MCF 10A (cell line): ENCODE measurements at regions of chr15 and their contacts with region 1.

Region 1: GRCh38 chr15:29821416-29822131 is 694 bp downstream of the TJP1 start:
- DNase-seq: peak; percentile 87
- H3K4me3 Mint-ChIP-seq: peak overlapping the region; percentile 87
- H3K27ac Mint-ChIP-seq: peak overlapping the region; percentile 92
- H3K4me1 Mint-ChIP-seq: peaks cover 11% of the 10 kb centered on the region
- H3K27me3 Mint-ChIP-seq: no peaks in the 10 kb centered on the region
- CTCF ChIP-seq: no peak

Region 2: DNA sequence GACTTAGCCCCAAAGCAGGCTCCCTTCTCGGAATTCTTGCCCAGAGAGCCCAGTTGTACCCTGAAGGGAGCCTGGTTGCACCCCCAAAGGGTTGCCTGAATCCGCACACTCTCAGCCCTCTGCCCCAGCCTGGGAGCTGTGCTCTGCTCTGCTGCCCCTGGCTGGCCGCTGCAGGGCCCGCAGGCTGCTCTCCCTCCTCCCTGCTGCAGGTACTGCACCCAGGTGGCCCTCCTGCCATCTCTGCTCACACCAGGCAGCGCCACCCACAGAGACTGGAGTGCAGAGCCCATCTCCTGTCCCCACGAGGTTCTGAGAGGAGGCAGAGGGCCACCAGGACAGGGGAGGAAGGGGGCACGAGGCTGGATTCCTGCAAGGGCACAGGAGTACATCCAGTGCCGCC is 417.8 kb before region 1 on chr15:
- CTCF ChIA-PET with region 1: no interaction called
- POLR2A ChIA-PET with region 1: no interaction called
- intact Hi-C with region 1: no loop called
- DNase-seq: no peak
- H3K4me3 Mint-ChIP-seq: no peak overlapping the region
- H3K27ac Mint-ChIP-seq: no peak overlapping the region
- H3K4me1 Mint-ChIP-seq: no peaks in the 10 kb centered on the region
- H3K27me3 Mint-ChIP-seq: peaks cover 78% of the 10 kb centered on the region
- CTCF ChIP-seq: no peak

Region 3: DNA sequence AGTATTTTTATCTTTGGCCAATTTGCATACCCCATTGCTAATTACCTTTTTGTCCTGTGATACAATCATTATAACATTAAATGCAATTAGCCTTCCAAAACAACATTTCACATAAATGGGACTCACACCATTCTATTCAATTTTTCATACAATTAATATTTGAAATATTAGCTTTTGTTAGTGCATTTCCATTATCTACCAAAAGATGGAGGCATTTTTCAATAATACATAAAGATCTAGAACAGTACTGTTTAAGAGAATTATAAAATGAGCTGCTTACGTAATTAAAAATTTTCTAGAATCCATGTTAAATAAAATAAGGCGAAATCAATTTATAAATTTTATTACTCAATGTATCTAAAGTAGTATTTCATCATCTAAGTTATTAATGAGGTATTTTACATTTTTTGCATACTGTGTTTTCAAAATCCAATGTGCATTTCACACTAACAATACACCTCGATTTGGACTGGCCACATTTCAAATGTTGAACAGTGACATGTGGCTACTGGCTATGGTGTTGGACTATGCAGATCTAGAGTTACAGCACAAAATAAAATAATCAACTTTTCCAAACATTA is 73.6 kb before region 1 on chr15:
- CTCF ChIA-PET with region 1: interaction called, 4 read pairs
- POLR2A ChIA-PET with region 1: interaction called, 36 read pairs
- intact Hi-C with region 1: loop called (anchors 2 kb)
- DNase-seq: peak; percentile 30
- H3K4me3 Mint-ChIP-seq: no peak overlapping the region
- H3K27ac Mint-ChIP-seq: no peak overlapping the region
- H3K4me1 Mint-ChIP-seq: no peaks in the 10 kb centered on the region
- H3K27me3 Mint-ChIP-seq: no peaks in the 10 kb centered on the region
- CTCF ChIP-seq: peak; percentile 38

Region 4: DNA sequence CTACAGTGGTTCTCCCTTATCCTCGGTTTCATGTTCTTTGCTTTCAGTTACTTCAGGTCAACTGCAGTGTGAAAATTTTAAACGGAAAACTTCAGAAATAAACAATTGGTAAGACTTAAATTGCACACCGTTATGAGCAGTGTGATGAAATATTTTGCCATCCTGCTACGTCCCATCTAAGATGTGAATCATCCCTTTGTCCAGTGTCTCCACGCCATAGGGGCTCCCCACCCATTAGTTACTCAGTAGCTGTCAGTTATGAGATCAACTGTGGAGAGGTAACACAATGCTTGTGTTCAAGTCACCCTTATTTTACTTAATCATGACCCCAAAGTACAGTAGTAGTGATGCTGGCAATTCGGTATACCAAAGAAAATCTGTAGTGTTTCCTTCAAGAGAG is 46.7 kb before region 1 on chr15:
- CTCF ChIA-PET with region 1: no interaction called
- POLR2A ChIA-PET with region 1: interaction called, 4 read pairs
- intact Hi-C with region 1: loop called (anchors 2 kb)
- DNase-seq: peak; percentile 88
- H3K4me3 Mint-ChIP-seq: peak overlapping the region; percentile 8
- H3K27ac Mint-ChIP-seq: peak overlapping the region; percentile 81
- H3K4me1 Mint-ChIP-seq: peaks cover 30% of the 10 kb centered on the region
- H3K27me3 Mint-ChIP-seq: no peaks in the 10 kb centered on the region
- CTCF ChIP-seq: no peak

Region 5: GRCh38 chr15:29835301-29835700 is 13.7 kb after region 1 on chr15:
- CTCF ChIA-PET with region 1: interaction called, 3 read pairs
- POLR2A ChIA-PET with region 1: interaction called, 35 read pairs
- intact Hi-C with region 1: no loop called
- DNase-seq: peak; percentile 65
- H3K4me3 Mint-ChIP-seq: no peak overlapping the region
- H3K27ac Mint-ChIP-seq: peak overlapping the region; percentile 61
- H3K4me1 Mint-ChIP-seq: peaks cover 14% of the 10 kb centered on the region
- H3K27me3 Mint-ChIP-seq: no peaks in the 10 kb centered on the region
- CTCF ChIP-seq: no peak

Region 6: GRCh38 chr15:29913528-29914135 is 92.1 kb after region 1 on chr15:
- CTCF ChIA-PET with region 1: no interaction called
- POLR2A ChIA-PET with region 1: interaction called, 16 read pairs
- intact Hi-C with region 1: no loop called
- DNase-seq: no peak
- H3K4me3 Mint-ChIP-seq: no peak overlapping the region
- H3K27ac Mint-ChIP-seq: no peak overlapping the region
- H3K4me1 Mint-ChIP-seq: peaks cover 17% of the 10 kb centered on the region
- H3K27me3 Mint-ChIP-seq: no peaks in the 10 kb centered on the region
- CTCF ChIP-seq: no peak

Region 7: DNA sequence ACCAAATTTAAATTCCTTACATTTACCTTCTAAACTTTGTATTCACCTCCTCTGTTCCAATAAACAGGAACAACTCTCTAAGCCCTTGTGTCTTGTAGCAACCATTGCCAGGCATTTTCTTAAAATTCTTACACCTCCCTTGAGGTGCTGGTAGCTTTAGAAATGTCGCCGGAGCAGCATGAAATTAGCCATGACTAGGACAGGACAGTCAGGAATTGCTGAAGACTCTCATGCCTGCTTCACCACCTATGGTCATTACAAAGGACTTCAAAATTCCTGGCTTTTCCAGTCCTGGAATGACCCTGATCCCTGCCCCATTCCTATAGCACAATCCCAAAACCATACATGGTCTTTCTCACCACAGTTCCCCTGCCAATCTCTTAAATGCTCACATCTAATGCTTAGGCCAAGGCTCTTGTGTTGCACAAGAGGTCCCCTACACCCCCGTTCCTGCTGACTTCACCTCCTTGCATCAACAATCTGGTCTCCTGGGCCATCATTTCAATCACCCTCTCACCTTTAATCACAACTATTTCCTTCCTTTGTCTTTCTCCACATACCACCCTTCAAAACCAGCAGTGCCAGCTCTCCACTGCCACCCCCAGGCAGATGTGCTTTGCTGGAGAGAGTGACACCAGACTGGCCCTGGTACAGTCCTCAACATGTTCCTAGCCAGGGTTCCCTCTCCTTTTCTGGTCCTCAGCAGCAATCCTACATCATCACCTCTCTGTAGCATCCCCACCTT is 113.9 kb after region 1 on chr15:
- CTCF ChIA-PET with region 1: interaction called, 3 read pairs
- POLR2A ChIA-PET with region 1: interaction called, 76 read pairs
- intact Hi-C with region 1: no loop called
- DNase-seq: peak; percentile 48
- H3K4me3 Mint-ChIP-seq: peak overlapping the region; percentile 21
- H3K27ac Mint-ChIP-seq: peak overlapping the region; percentile 68
- H3K4me1 Mint-ChIP-seq: peaks cover 46% of the 10 kb centered on the region
- H3K27me3 Mint-ChIP-seq: no peaks in the 10 kb centered on the region
- CTCF ChIP-seq: no peak

Region 8: GRCh38 chr15:29962407-29962806 is 140.8 kb after region 1 on chr15:
- CTCF ChIA-PET with region 1: no interaction called
- POLR2A ChIA-PET with region 1: no interaction called
- intact Hi-C with region 1: no loop called
- DNase-seq: no peak
- H3K4me3 Mint-ChIP-seq: no peak overlapping the region
- H3K27ac Mint-ChIP-seq: no peak overlapping the region
- H3K4me1 Mint-ChIP-seq: no peaks in the 10 kb centered on the region
- H3K27me3 Mint-ChIP-seq: no peaks in the 10 kb centered on the region
- CTCF ChIP-seq: no peak